GM10248 (cell line): ENCODE measurements at regions of chr9 and their contacts with region 1.

Region 1: DNA sequence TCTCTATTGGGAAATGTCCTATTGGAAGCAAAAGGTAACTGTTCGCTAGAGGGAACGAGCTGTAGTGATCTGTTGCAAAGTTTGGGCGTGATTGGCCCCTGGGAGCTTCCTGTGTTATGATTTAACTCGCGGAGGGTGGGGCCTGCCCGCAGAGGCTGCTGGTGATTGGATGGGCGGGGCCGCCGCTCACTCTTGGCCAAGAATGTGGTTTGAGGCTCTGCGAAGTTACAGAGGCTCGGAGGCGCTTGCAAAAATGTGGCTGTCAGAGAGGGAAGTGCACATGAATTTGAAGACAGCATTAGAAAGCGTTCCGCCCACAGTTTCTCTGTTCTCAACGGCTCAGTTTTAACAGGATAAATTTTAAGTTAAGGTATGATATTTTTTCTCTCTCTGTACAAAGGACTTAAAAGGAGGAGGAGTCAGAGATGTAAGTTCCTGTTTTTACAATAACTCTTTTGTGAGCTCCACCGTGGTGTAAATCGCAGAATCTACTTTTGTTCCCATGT is 46.9 kb downstream of the CNTRL start:
- DNase-seq: peak; percentile 86
- CTCF ChIP-seq: no peak

Region 2: DNA sequence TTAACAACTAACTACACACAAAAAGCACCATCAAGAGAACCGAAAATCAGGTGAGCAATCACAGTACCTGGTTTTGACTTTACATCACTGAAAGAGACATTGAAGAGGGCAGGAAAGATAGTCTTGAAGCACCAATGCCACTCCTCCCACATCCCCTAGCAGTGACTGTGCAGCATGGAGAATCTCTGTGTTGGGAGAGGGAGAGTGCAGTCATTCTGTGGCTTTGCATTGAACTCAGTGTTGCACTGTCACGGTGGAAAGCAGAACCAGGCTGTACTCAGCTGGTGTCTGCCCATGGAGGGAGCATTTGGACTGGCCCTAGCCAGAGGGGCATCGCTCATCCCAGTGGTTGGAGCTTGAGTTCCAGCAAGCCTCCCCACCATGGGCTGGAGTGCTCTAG is 112.0 kb before region 1 on chr9:
- CTCF ChIA-PET with region 1: no interaction called
- POLR2A ChIA-PET with region 1: no interaction called
- DNase-seq: no peak
- CTCF ChIP-seq: no peak

Region 3: DNA sequence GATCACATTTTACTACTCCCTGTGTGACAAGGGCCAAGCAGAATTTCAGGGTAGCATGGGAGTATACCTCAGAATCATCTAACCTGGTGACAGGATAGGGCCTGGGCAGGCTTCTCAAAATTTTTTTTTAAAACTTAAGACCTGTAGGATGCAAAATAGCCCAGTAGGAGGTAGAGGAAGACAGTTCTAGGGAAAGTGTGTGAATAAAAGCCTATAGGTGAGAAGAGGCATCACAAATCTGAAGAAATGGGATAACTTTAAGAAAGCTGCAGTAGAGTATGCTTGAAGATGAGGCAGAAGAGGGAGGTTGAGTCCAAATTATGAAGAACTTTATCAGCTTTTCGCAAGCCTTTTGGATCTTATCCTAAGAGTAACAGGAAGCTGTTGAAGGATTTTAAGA is 14.6 kb before region 1 on chr9:
- CTCF ChIA-PET with region 1: interaction called, 16 read pairs
- POLR2A ChIA-PET with region 1: no interaction called
- DNase-seq: no peak
- CTCF ChIP-seq: no peak

Region 4: DNA sequence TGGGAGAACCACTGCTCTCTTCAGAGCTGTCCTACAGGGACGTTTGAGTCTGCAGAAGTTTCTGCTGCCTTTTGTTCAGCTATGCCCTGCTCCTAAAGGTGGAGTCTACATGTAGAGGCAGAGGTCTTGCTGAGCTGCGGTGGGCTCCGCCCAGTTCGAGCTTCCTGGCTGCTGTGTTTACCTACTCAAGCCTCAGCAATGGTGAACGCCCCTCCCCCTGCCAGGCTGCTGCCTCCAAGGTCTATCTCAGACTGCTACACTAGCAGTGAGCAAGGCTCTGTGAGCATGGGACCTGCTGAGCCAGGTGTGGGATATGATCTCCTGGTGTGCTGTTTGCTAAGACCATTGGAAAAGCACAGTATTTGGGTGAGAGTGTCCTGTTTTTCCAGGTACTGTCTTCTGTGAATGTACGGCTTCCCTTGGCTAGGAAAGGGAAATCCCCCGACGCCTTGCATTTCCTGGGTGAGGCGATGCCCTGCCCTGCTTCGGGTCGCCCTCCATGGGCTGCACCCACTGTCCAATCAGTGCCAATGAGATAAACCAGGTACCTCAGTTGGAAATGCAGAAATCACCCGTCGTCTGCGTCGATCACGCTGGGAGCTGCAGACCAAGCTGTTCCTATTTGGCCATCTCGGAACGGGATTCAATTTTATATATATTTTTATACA is 11.6 kb after region 1 on chr9:
- CTCF ChIA-PET with region 1: interaction called, 22 read pairs
- POLR2A ChIA-PET with region 1: interaction called, 3 read pairs
- DNase-seq: no peak
- CTCF ChIP-seq: no peak